Activated CD8-positive, alpha-beta T cell treated with anti-CD3 and anti-CD28 coated beads for 36 hours (primary cell): ENCODE measurements at regions of chr13 and their contacts with region 1.

Region 1: DNA sequence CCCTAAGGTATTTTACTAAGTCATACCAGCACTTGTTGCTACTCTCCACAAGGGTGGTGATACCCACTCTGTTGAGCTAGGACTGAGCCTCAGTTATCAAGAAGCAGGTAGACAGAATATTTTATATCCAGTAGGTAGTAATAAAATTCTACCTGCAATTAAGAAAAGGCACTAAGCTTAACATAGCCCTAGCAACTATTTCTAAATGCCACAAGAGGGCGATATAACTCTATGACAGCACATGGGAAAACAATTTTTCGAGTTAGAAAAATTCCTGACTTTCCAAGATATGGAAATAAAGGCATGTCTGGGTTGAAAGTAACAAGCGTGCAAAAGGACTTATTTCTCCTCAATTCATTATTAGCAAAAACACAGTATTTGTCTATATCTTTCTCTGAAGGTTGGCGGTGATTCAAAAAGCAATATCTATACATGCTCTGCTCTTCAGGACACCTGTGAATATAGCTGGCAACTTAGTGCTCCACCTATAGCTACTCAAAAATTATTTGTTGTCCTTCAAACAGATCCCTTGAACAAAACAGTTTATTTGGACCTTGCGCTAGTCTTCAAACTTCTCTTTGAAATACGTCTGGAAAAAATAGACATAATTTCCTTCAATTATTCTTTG is 14.7 kb downstream of the CCDC169 start:
- DNase-seq: no peak
- ATAC-seq: no peak
- H3K4me3 Mint-ChIP-seq: no peak overlapping the region
- H3K27ac Mint-ChIP-seq: no peak overlapping the region
- H3K4me1 Mint-ChIP-seq: no peaks in the 10 kb centered on the region
- H3K27me3 Mint-ChIP-seq: peaks cover 11% of the 10 kb centered on the region
- CTCF ChIP-seq: peak; percentile 81

Region 2: DNA sequence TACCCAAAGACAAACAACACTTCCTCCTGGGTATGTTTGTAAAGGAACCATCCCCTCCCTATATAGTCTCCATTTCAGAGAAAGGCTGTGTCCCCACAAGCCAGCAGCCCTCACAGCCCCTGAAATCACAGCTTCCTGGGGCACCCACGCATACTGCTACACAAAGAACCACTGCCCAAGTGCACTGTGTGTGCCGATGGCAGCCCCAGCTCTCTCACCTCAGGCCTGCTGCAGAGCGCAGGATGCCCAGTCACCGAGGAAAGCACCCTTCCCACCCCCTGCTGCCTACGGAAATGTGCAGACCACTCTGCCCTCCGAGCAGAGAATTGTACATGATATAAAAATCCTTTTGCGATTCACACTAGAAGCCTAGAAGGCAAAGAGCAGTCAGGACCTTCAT is 108.0 kb before region 1 on chr13:
- CTCF ChIA-PET with region 1: no interaction called
- POLR2A ChIA-PET with region 1: no interaction called
- intact Hi-C with region 1: no loop called
- DNase-seq: no peak
- ATAC-seq: no peak
- H3K4me3 Mint-ChIP-seq: no peak overlapping the region
- H3K27ac Mint-ChIP-seq: no peak overlapping the region
- H3K4me1 Mint-ChIP-seq: no peaks in the 10 kb centered on the region
- H3K27me3 Mint-ChIP-seq: no peaks in the 10 kb centered on the region
- CTCF ChIP-seq: no peak

Region 3: GRCh38 chr13:36297366-36298338 is 14.7 kb after region 1 on chr13 and contains the start of gene CCDC169:
- CTCF ChIA-PET with region 1: interaction called, 15 read pairs
- POLR2A ChIA-PET with region 1: no interaction called
- intact Hi-C with region 1: no loop called
- DNase-seq: peak; percentile 61
- ATAC-seq: peak; percentile 89
- H3K4me3 Mint-ChIP-seq: peak within 1 kb of the TSS; percentile 78
- H3K27ac Mint-ChIP-seq: peak within 1 kb of the TSS; percentile 56
- H3K4me1 Mint-ChIP-seq: peaks cover 8% of the 10 kb centered on the region
- H3K27me3 Mint-ChIP-seq: peaks cover 32% of the 10 kb centered on the region
- CTCF ChIP-seq: no peak
- total RNA-seq, gene CCDC169: not detected

Region 4: GRCh38 chr13:36700170-36700569 is 417.2 kb after region 1 on chr13:
- CTCF ChIA-PET with region 1: no interaction called
- POLR2A ChIA-PET with region 1: no interaction called
- intact Hi-C with region 1: no loop called
- DNase-seq: no peak
- ATAC-seq: no peak
- H3K4me3 Mint-ChIP-seq: no peak overlapping the region
- H3K27ac Mint-ChIP-seq: no peak overlapping the region
- H3K4me1 Mint-ChIP-seq: no peaks in the 10 kb centered on the region
- H3K27me3 Mint-ChIP-seq: peaks cover 12% of the 10 kb centered on the region
- CTCF ChIP-seq: no peak